CD8-positive, alpha-beta T cell (primary cell): ENCODE measurements at regions of chr4 and their contacts with region 1.

Region 1: DNA sequence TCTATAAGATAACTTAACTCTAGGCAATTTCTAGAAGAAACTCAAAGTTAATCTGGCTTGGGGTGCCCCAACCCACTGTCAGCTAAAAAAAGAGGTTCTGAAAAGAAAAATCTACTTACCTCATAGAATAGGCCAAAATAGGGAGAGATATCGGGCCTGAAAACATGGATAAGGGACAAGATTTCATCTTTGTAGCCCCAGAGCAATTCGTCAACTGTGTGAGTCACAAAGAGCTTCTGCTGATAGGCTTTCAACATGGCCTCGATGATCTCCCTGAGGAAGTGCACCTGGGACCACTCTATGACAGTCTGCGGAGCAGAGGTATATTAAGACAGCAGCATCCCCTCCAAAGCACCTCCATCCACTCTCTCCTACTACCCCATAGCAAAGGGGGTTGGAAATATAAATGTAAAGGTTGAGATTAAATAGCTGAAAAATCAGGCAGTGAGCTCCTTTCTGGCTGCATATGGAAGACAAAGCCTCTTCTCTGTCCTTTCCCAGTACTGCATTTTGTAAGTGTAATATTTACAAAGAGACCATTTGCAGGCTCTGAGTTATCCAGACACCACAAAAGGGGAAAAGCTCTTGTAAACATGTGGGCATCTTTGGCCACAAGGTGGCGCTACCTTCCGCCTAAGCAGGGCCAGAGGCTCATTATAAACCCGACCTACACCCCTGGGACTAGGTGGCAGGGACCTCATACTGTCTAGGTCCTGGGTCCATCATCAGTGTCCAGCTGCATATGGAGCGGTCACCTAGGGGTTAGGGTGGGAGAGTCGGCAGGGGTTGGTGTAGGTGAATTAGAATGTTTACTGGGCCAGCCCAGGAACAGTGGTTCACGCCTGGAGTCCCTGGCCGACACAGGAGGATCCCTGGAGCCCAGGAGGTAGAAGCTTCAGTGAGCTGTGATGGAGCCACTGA is 31.5 kb upstream of the NUP54 start:
- DNase-seq: peak; percentile 61 to 89 (median 82)
- ATAC-seq: peak; percentile 93
- H3K4me3 ChIP-seq: no peak overlapping the region
- H3K4me3 Mint-ChIP-seq: no peak overlapping the region
- H3K27ac ChIP-seq: no peak overlapping the region
- H3K27ac Mint-ChIP-seq: no peak overlapping the region
- H3K4me1 ChIP-seq: no peaks in the 10 kb centered on the region
- H3K4me1 Mint-ChIP-seq: no peaks in the 10 kb centered on the region
- H3K27me3 ChIP-seq: no peaks in the 10 kb centered on the region
- H3K27me3 Mint-ChIP-seq: no peaks in the 10 kb centered on the region
- CTCF ChIP-seq: peak; percentile 93

Region 2: GRCh38 chr4:75989846-75990528 is 189.7 kb before region 1 on chr4:
- CTCF ChIA-PET with region 1: no interaction called
- POLR2A ChIA-PET with region 1: no interaction called
- intact Hi-C with region 1: no loop called
- DNase-seq: peak in 2 of 9 experiments; percentile 8 to 32
- ATAC-seq: no peak
- H3K4me3 ChIP-seq: peak overlapping the region; percentile 78 to 91
- H3K4me3 Mint-ChIP-seq: peak overlapping the region; percentile 96
- H3K27ac ChIP-seq: peak overlapping the region; percentile 17 to 73
- H3K27ac Mint-ChIP-seq: peak overlapping the region; percentile 95
- H3K4me1 ChIP-seq: peaks cover 37% of the 10 kb centered on the region
- H3K4me1 Mint-ChIP-seq: peaks cover 29% of the 10 kb centered on the region
- H3K27me3 ChIP-seq: no peaks in the 10 kb centered on the region
- H3K27me3 Mint-ChIP-seq: peaks cover 1% of the 10 kb centered on the region
- CTCF ChIP-seq: no peak

Region 3: GRCh38 chr4:76198411-76199237 is 19.0 kb after region 1 on chr4:
- CTCF ChIA-PET with region 1: interaction called, 12 read pairs
- POLR2A ChIA-PET with region 1: no interaction called
- intact Hi-C with region 1: no loop called
- DNase-seq: peak in 3 of 9 experiments; percentile 31 to 49 (median 31)
- ATAC-seq: peak; percentile 45
- H3K4me3 ChIP-seq: no peak overlapping the region
- H3K4me3 Mint-ChIP-seq: peak overlapping the region; percentile 3
- H3K27ac ChIP-seq: peak overlapping the region in 1 of 2 experiments; percentile 15
- H3K27ac Mint-ChIP-seq: peak overlapping the region; percentile 71
- H3K4me1 ChIP-seq: peaks cover 37% of the 10 kb centered on the region
- H3K4me1 Mint-ChIP-seq: peaks cover 53% of the 10 kb centered on the region
- H3K27me3 ChIP-seq: no peaks in the 10 kb centered on the region
- H3K27me3 Mint-ChIP-seq: no peaks in the 10 kb centered on the region
- CTCF ChIP-seq: no peak

Region 4: GRCh38 chr4:76233957-76234678 is 54.5 kb after region 1 on chr4:
- CTCF ChIA-PET with region 1: interaction called, 10 read pairs
- POLR2A ChIA-PET with region 1: no interaction called
- intact Hi-C with region 1: no loop called
- DNase-seq: no peak
- ATAC-seq: no peak
- H3K4me3 ChIP-seq: no peak overlapping the region
- H3K4me3 Mint-ChIP-seq: no peak overlapping the region
- H3K27ac ChIP-seq: no peak overlapping the region
- H3K27ac Mint-ChIP-seq: no peak overlapping the region
- H3K4me1 ChIP-seq: no peaks in the 10 kb centered on the region
- H3K4me1 Mint-ChIP-seq: no peaks in the 10 kb centered on the region
- H3K27me3 ChIP-seq: no peaks in the 10 kb centered on the region
- H3K27me3 Mint-ChIP-seq: no peaks in the 10 kb centered on the region
- CTCF ChIP-seq: no peak

Region 5: DNA sequence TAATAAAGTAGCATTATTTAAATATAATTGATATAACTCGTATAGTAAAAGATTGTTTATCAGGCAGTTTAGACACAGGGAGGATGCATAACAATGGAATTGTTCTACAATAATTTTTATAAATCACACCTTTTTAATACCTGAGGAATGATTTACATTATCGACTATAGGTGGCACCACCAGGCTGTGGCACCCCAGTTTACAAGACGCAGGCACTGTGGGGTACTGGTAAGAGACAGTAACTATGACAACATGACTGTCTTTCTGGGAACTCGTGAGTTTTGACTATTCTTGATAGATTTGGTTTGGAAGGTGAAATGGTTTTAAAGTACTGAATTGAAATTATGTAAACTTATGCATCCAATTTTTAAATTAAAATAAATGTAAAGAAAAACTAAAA is 99.8 kb after region 1 on chr4:
- CTCF ChIA-PET with region 1: interaction called, 20 read pairs
- POLR2A ChIA-PET with region 1: no interaction called
- intact Hi-C with region 1: no loop called
- DNase-seq: peak in 6 of 9 experiments; percentile 2 to 55 (median 30)
- ATAC-seq: peak; percentile 49
- H3K4me3 ChIP-seq: no peak overlapping the region
- H3K4me3 Mint-ChIP-seq: no peak overlapping the region
- H3K27ac ChIP-seq: no peak overlapping the region
- H3K27ac Mint-ChIP-seq: no peak overlapping the region
- H3K4me1 ChIP-seq: no peaks in the 10 kb centered on the region
- H3K4me1 Mint-ChIP-seq: no peaks in the 10 kb centered on the region
- H3K27me3 ChIP-seq: peaks cover 0 to 5% of the 10 kb centered on the region in 2 experiments
- H3K27me3 Mint-ChIP-seq: peaks cover 10% of the 10 kb centered on the region
- CTCF ChIP-seq: peak; percentile 18

Region 6: GRCh38 chr4:77044461-77045150 is 864.9 kb after region 1 on chr4:
- CTCF ChIA-PET with region 1: no interaction called
- POLR2A ChIA-PET with region 1: no interaction called
- intact Hi-C with region 1: loop called in 1 of 2 experiments (anchors 10 kb)
- DNase-seq: peak in 2 of 9 experiments; percentile 46 to 62
- ATAC-seq: peak; percentile 60
- H3K4me3 ChIP-seq: no peak overlapping the region
- H3K4me3 Mint-ChIP-seq: no peak overlapping the region
- H3K27ac ChIP-seq: no peak overlapping the region
- H3K27ac Mint-ChIP-seq: peak overlapping the region; percentile 60
- H3K4me1 ChIP-seq: peaks cover 6% of the 10 kb centered on the region
- H3K4me1 Mint-ChIP-seq: peaks cover 16% of the 10 kb centered on the region
- H3K27me3 ChIP-seq: no peaks in the 10 kb centered on the region
- H3K27me3 Mint-ChIP-seq: no peaks in the 10 kb centered on the region
- CTCF ChIP-seq: peak; percentile 56